ENCODE measurements at regions of chr14 and their contacts with region 1.

Region 1: DNA sequence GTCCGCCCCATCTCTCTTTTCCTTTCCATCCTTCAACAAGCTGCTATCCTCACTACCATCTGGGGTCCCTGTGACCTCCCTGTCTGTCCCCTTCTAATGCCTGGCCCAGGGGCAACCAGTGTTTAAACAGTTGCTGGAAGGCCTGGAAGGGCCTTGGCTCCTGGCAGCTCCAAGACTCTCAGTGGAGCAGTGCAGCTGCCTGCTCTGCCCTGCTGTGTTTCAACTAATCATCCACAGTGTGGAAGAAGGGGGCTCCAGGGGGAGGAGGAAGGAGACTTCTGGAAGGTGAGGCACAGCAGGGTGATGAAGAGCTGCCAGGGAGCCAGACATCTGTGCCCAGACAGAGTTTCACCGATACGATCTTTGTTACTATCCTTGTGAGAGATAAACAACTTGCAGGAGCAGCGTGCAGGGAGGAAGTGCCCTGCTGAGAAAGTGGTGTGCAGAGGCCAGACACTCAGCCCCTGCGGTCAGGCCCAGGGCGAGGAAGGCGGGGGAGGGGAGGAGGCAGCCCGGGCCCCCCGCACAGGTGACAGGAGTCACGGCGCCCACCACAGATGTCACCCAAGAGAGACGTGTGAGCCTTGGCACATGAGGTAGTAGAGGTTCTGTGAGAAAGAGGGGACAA is 1061.8 kb downstream of the BCL11B start:
- DNase-seq: peak; percentile 65
- ATAC-seq: peak; percentile 66
- H3K4me3 Mint-ChIP-seq: peak overlapping the region; percentile 75
- H3K27ac Mint-ChIP-seq: peak overlapping the region; percentile 89
- H3K4me1 Mint-ChIP-seq: peaks cover 55% of the 10 kb centered on the region
- H3K27me3 Mint-ChIP-seq: no peaks in the 10 kb centered on the region

Region 2: GRCh38 chr14:98198385-98198784 is 11.8 kb before region 1 on chr14:
- POLR2A ChIA-PET with region 1: interaction called, 12 read pairs
- DNase-seq: peak; percentile 60
- ATAC-seq: peak; percentile 80
- H3K4me3 Mint-ChIP-seq: peak overlapping the region; percentile 41
- H3K27ac Mint-ChIP-seq: peak overlapping the region; percentile 26
- H3K4me1 Mint-ChIP-seq: peaks cover 70% of the 10 kb centered on the region
- H3K27me3 Mint-ChIP-seq: peaks cover 2% of the 10 kb centered on the region